ENCODE measurements at regions of chr12 and their contacts with region 1.

Region 1: DNA sequence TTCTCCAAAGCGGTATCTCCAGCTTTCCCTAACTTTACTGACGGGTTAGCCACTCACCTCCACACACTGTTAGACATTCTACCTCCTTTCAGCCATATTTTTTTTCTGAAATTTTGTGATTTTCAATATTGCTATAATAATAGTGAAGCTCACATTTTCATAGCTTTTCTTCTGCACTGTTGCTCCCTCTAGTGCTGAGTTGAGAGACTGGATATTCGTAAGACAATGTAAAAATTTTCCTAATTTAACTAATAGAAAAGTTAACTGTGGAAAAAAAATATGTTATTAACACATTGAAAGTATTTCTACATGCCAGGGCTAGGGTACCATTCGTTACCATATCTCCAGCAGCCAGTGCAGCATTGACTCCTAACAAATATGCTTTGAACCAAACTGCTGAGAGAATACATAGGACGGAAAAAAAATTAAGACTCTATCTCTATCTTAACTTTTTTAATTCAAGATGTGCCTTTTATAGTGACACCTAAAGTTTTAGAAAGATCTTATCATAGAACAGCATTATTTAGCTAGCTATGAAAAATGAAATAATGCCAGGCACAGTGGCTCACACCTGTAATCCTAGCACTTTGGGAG is 48.7 kb upstream of the ABCC9 start:
- DNase-seq: no peak

Region 2: GRCh38 chr12:21697904-21698630 is 291.8 kb before region 1 on chr12:
- intact Hi-C with region 1: loop called in 1 of 2 experiments (anchors 5 kb)
- DNase-seq: no peak

Region 3: GRCh38 chr12:21764065-21764464 is 225.9 kb before region 1 on chr12:
- intact Hi-C with region 1: loop called in 1 of 2 experiments (anchors 10 kb)
- DNase-seq: no peak

Region 4: GRCh38 chr12:21962236-21962635 is 27.7 kb before region 1 on chr12:
- intact Hi-C with region 1: no loop called
- DNase-seq: no peak

Region 5: GRCh38 chr12:22034709-22035506 is 45.0 kb after region 1 on chr12:
- intact Hi-C with region 1: no loop called
- DNase-seq: no peak